Activated CD4-positive, alpha-beta memory T cell treated with anti-CD3 and anti-CD28 coated beads, Interleukin-2, amount 10 ng/mL, durations not matched to agents 7 days and 5 days (primary cell): ENCODE measurements at regions of chr1 and their contacts with region 1.

Region 1: GRCh38 chr1:41812051-41812450 is 106.7 kb downstream of the HIVEP3 start:
- DNase-seq: peak; percentile 74
- H3K4me3 Mint-ChIP-seq: no peak overlapping the region
- H3K27ac Mint-ChIP-seq: peak overlapping the region; percentile 18
- H3K4me1 Mint-ChIP-seq: peaks cover 50% of the 10 kb centered on the region
- H3K27me3 Mint-ChIP-seq: no peaks in the 10 kb centered on the region

Region 2: DNA sequence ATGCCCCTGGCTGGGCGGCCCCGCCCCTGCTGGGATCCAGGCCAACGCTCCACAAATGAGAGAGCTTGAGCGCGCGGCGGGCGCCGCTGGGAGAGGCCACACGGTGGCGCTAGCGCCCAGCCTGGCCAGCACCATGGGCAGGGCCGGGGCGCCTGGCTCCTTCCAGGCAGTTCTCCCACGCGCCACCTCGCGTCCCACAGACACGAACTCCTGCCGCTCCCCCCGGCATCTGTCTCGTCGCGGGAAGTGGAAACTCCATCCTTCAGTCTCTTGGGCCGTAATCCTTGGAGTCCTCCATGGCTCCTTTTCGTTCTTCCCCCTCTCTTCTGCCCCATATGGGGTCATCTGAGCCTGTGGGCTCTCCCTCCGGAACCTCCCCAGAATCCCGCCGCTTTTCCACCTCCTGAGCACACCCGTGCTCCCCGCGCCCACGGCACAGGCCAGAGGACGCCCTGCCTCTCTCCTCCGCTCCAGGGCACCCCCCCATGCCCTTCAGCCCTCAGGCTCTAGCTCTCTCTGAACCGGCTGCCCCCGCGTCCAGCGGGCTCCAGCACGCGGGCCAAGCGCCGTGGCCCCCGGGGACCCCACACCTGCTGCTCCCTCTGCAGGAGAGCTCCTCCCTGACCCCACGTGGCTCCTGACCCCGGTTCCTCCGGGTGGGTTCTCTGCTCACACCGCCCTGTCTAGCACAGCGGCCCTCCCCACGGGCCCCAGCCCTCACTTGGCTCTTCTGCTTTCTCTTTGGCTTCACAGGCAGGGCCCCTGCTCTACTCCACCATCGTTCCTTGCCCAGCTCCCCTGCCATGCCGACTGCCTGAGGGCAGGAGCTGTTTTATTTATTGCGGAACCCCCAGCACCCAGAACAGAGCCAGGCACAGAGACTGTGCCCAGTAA is 295.6 kb before region 1 on chr1:
- CTCF ChIA-PET with region 1: interaction called, 11 read pairs
- POLR2A ChIA-PET with region 1: no interaction called
- DNase-seq: peak; percentile 66
- H3K4me3 Mint-ChIP-seq: no peak overlapping the region
- H3K27ac Mint-ChIP-seq: no peak overlapping the region
- H3K4me1 Mint-ChIP-seq: peaks cover 5% of the 10 kb centered on the region
- H3K27me3 Mint-ChIP-seq: no peaks in the 10 kb centered on the region

Region 3: DNA sequence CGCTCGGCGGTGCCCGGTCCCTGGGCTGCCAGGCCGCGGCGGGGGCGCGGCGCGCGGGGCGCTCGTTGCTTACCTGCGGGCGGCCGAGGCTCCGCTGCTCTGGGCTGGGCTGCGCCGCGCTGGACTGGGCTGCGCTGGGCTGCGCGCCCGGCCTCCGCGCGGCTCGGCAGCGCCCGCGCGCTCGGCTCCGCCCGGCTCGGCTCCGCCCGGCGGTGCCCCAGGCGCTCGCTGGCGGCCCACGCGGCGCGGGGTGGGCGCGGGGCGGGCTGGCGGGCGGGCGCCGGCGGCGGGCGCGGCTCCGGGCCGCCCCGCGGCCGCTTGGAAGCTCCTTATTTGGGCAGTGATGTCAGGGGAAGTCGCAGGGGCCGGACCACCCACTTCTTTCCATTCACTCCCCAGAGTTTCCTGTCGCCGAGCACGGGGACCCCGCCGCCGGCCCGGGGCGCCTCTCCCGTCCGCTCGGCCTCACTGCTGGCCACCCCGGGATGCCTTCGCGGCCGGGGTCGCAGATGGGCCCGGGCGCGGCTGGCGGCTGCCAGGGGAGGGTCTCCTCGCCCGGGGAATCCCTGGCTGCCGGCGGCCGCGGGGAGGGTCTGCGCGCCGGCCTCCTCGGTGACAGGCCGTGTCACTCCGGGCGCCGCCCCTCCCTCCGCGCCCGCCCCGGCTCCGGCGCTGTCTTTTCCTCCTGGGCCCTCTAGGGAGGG is 149.8 kb before region 1 on chr1:
- CTCF ChIA-PET with region 1: interaction called, 12 read pairs
- POLR2A ChIA-PET with region 1: no interaction called
- DNase-seq: peak; percentile 84
- H3K4me3 Mint-ChIP-seq: peak overlapping the region; percentile 66
- H3K27ac Mint-ChIP-seq: peak overlapping the region; percentile 74
- H3K4me1 Mint-ChIP-seq: peaks cover 83% of the 10 kb centered on the region
- H3K27me3 Mint-ChIP-seq: no peaks in the 10 kb centered on the region

Region 4: GRCh38 chr1:41791667-41792484 is 20.2 kb before region 1 on chr1:
- CTCF ChIA-PET with region 1: interaction called, 17 read pairs
- POLR2A ChIA-PET with region 1: interaction called, 53 read pairs
- DNase-seq: peak; percentile 63
- H3K4me3 Mint-ChIP-seq: peak overlapping the region; percentile 53
- H3K27ac Mint-ChIP-seq: peak overlapping the region; percentile 93
- H3K4me1 Mint-ChIP-seq: peaks cover 57% of the 10 kb centered on the region
- H3K27me3 Mint-ChIP-seq: no peaks in the 10 kb centered on the region

Region 5: DNA sequence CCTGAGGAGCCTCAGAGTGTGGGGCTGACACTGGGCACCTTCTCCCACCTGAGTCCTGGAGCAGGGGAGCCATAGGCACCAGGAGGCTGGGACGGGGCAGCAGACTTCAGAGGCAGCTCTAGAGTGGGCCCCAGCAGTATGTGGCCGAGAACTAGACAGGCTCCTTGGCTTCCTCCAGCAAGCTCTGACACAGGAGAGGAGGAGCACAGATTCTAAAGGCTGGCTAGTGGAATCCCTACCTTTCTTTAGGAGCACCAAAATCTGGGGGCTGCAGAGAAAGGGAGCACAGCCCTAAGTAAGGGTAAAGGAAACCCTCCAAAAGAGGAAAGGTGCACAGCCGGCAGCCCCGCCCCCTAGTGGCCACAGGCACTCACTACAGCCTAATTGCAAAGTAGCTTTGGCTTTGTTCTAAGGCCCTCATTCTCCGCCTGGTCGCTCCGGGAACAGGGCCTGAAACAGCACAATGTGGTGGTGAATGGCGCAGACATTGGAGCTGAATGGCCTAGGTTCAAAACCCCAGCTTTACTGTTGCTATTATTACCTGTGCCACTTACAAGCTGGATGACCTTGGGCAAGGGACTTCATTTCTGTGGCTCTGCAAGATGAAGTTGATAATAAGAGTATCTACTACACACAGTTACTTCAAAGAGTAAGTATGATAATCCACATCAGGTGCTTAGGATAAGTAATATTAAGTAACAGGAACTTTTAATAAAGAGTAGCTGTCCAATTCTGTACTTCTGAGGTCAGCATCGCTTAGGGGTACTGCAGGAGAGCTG is 361.3 kb after region 1 on chr1:
- CTCF ChIA-PET with region 1: interaction called, 20 read pairs
- POLR2A ChIA-PET with region 1: interaction called, 4 read pairs
- DNase-seq: peak; percentile 69
- H3K4me3 Mint-ChIP-seq: no peak overlapping the region
- H3K27ac Mint-ChIP-seq: no peak overlapping the region
- H3K4me1 Mint-ChIP-seq: no peaks in the 10 kb centered on the region
- H3K27me3 Mint-ChIP-seq: no peaks in the 10 kb centered on the region